ENCODE measurements at regions of chr6 and their contacts with region 1.

Region 1: DNA sequence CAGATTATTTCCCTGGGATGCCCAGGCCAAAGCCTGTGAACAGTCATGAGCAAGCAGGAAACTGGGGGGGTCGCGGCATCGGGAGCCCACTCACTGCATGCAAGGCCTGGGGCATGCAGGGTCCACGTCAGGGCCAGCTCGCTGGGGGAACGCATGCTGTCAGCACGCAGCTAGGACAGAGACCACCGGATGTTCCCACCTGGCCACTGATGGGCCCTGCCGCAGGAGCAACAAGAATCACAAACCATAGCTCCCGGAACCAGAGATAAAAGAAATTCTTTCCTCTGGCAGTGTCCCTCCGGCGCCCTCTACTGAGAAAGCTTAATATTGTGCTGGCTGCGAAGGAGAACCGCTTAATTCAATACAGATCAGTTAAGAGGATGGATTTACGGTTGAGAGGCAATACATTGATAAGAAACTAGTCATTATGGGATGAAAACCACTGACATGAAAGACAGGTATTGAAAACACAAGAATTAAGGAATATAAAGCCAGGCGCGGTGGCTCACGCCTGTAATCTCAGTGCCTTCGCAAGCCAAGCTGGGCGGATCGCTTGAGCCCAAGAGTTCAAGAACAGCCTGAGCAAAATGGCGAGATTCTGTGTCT is 32.6 kb downstream of the C6orf15 start:
- DNase-seq: peak; percentile 66 to 71 (median 68)
- H3K4me3 ChIP-seq: no peak overlapping the region
- H3K4me3 Mint-ChIP-seq: peak overlapping the region; percentile 41 to 77 (median 64)
- H3K27ac ChIP-seq: no peak overlapping the region
- H3K27ac Mint-ChIP-seq: peak overlapping the region in 2 of 7 donors; percentile 11 to 64
- H3K4me1 ChIP-seq: peaks cover 8% of the 10 kb centered on the region
- H3K4me1 Mint-ChIP-seq: peaks cover 2 to 8% (median 6%) of the 10 kb centered on the region in 4 donors
- H3K27me3 ChIP-seq: no peaks in the 10 kb centered on the region
- H3K27me3 Mint-ChIP-seq: peaks cover 3 to 4% of the 10 kb centered on the region in 2 donors

Region 2: GRCh38 chr6:30914076-30914853 is 165.5 kb before region 1 on chr6 and contains the start of gene VARS2:
- CTCF ChIA-PET with region 1: interaction called, 24 read pairs
- POLR2A ChIA-PET with region 1: interaction called, 4 read pairs
- intact Hi-C with region 1: no loop called
- DNase-seq: peak; percentile 86 to 92 (median 89)
- H3K4me3 ChIP-seq: peak within 1 kb of the TSS; percentile 70 to 94
- H3K4me3 Mint-ChIP-seq: peak within 1 kb of the TSS; percentile 89 to 96 (median 95)
- H3K27ac ChIP-seq: peak within 1 kb of the TSS; percentile 77
- H3K27ac Mint-ChIP-seq: peak within 1 kb of the TSS; percentile 83 to 98 (median 94)
- H3K4me1 ChIP-seq: peaks cover 21% of the 10 kb centered on the region
- H3K4me1 Mint-ChIP-seq: peaks cover 24 to 47% (median 34%) of the 10 kb centered on the region in 4 donors
- H3K27me3 ChIP-seq: no peaks in the 10 kb centered on the region
- H3K27me3 Mint-ChIP-seq: no peaks in the 10 kb centered on the region
- total RNA-seq, gene VARS2: 34.9 to 37.8 TPM

Region 3: DNA sequence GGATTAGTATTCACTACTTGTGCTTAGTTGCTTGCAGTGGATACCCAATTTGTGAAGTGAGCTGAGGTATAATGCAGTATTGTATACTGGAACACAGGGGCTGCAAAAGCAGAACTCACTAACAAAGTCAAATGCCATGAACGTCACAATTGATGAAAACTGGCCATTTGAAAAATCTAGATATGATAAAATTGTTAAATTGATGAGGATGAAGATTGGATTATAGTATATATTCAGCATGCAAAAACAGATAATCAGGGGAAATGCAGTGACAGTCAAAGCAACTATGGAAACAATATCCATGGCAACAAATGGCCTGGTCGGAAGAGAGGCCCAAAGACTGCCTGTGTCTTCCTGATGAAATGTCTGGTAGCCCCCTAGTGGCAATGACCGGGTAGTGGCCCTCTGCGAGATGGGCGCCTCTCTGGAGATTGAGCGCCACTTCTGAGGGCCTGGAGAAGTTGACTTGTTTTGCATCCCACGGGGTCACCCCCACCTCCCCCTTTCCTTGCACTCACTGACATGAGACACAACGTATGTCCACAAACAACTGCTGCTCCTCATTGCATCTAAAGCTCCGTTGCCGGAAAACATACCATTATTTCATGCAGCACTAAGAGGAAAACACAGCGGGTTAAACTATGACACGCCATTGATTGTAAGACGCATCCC is 11.0 kb before region 1 on chr6:
- CTCF ChIA-PET with region 1: interaction called, 38 read pairs
- POLR2A ChIA-PET with region 1: no interaction called
- intact Hi-C with region 1: no loop called
- DNase-seq: peak; percentile 58 to 72 (median 66)
- H3K4me3 ChIP-seq: no peak overlapping the region
- H3K4me3 Mint-ChIP-seq: no peak overlapping the region
- H3K27ac ChIP-seq: no peak overlapping the region
- H3K27ac Mint-ChIP-seq: peak overlapping the region in 2 of 7 donors; percentile 12 to 17
- H3K4me1 ChIP-seq: no peaks in the 10 kb centered on the region
- H3K4me1 Mint-ChIP-seq: peaks cover 0 to 2% (median 0%) of the 10 kb centered on the region in 4 donors
- H3K27me3 ChIP-seq: no peaks in the 10 kb centered on the region
- H3K27me3 Mint-ChIP-seq: peaks cover 0 to 3% of the 10 kb centered on the region in 2 donors

Region 4: GRCh38 chr6:31103136-31103535 is 23.4 kb after region 1 on chr6:
- CTCF ChIA-PET with region 1: interaction called, 16 read pairs
- POLR2A ChIA-PET with region 1: no interaction called
- intact Hi-C with region 1: no loop called
- DNase-seq: no peak
- H3K4me3 ChIP-seq: no peak overlapping the region
- H3K4me3 Mint-ChIP-seq: peak overlapping the region in 1 of 8 donors; percentile 41
- H3K27ac ChIP-seq: no peak overlapping the region
- H3K27ac Mint-ChIP-seq: no peak overlapping the region
- H3K4me1 ChIP-seq: no peaks in the 10 kb centered on the region
- H3K4me1 Mint-ChIP-seq: peaks cover 0 to 9% (median 6%) of the 10 kb centered on the region in 4 donors
- H3K27me3 ChIP-seq: no peaks in the 10 kb centered on the region
- H3K27me3 Mint-ChIP-seq: no peaks in the 10 kb centered on the region

Region 5: GRCh38 chr6:31128093-31128676 is 48.4 kb after region 1 on chr6:
- CTCF ChIA-PET with region 1: interaction called, 18 read pairs
- POLR2A ChIA-PET with region 1: no interaction called
- intact Hi-C with region 1: no loop called
- DNase-seq: peak; percentile 57 to 70 (median 62)
- H3K4me3 ChIP-seq: no peak overlapping the region
- H3K4me3 Mint-ChIP-seq: no peak overlapping the region
- H3K27ac ChIP-seq: no peak overlapping the region
- H3K27ac Mint-ChIP-seq: peak overlapping the region in 3 of 7 donors; percentile 7 to 52 (median 24)
- H3K4me1 ChIP-seq: peaks cover 3% of the 10 kb centered on the region
- H3K4me1 Mint-ChIP-seq: peaks cover 2 to 8% (median 7%) of the 10 kb centered on the region in 4 donors
- H3K27me3 ChIP-seq: no peaks in the 10 kb centered on the region
- H3K27me3 Mint-ChIP-seq: peaks cover 3 to 6% of the 10 kb centered on the region in 2 donors

Region 6: GRCh38 chr6:31143148-31143547 is 63.4 kb after region 1 on chr6:
- CTCF ChIA-PET with region 1: no interaction called
- POLR2A ChIA-PET with region 1: no interaction called
- intact Hi-C with region 1: no loop called
- DNase-seq: no peak
- H3K4me3 ChIP-seq: no peak overlapping the region
- H3K4me3 Mint-ChIP-seq: no peak overlapping the region
- H3K27ac ChIP-seq: no peak overlapping the region
- H3K27ac Mint-ChIP-seq: peak overlapping the region in 2 of 7 donors; percentile 29 to 52
- H3K4me1 ChIP-seq: no peaks in the 10 kb centered on the region
- H3K4me1 Mint-ChIP-seq: peaks cover 0 to 4% (median 0%) of the 10 kb centered on the region in 4 donors
- H3K27me3 ChIP-seq: no peaks in the 10 kb centered on the region
- H3K27me3 Mint-ChIP-seq: no peaks in the 10 kb centered on the region

Measured in CD4-positive, alpha-beta memory T cell (primary cell).